Activated naive CD4-positive, alpha-beta T cell treated with anti-CD3 and anti-CD28 coated beads for 36 hours (primary cell): ENCODE measurements at regions of chr14 and their contacts with region 1.

Region 1: GRCh38 chr14:35883677-35884293 is 57.6 kb downstream of the BRMS1L start:
- DNase-seq: peak; percentile 55
- H3K4me3 Mint-ChIP-seq: no peak overlapping the region
- H3K27ac Mint-ChIP-seq: no peak overlapping the region
- H3K4me1 Mint-ChIP-seq: no peaks in the 10 kb centered on the region
- H3K27me3 Mint-ChIP-seq: peaks cover 2% of the 10 kb centered on the region

Region 2: GRCh38 chr14:35944847-35945246 is 61.1 kb after region 1 on chr14:
- CTCF ChIA-PET with region 1: interaction called, 8 read pairs
- intact Hi-C with region 1: loop called (anchors 1 kb)
- DNase-seq: peak; percentile 45
- H3K4me3 Mint-ChIP-seq: no peak overlapping the region
- H3K27ac Mint-ChIP-seq: no peak overlapping the region
- H3K4me1 Mint-ChIP-seq: peaks cover 2% of the 10 kb centered on the region
- H3K27me3 Mint-ChIP-seq: no peaks in the 10 kb centered on the region

Region 3: DNA sequence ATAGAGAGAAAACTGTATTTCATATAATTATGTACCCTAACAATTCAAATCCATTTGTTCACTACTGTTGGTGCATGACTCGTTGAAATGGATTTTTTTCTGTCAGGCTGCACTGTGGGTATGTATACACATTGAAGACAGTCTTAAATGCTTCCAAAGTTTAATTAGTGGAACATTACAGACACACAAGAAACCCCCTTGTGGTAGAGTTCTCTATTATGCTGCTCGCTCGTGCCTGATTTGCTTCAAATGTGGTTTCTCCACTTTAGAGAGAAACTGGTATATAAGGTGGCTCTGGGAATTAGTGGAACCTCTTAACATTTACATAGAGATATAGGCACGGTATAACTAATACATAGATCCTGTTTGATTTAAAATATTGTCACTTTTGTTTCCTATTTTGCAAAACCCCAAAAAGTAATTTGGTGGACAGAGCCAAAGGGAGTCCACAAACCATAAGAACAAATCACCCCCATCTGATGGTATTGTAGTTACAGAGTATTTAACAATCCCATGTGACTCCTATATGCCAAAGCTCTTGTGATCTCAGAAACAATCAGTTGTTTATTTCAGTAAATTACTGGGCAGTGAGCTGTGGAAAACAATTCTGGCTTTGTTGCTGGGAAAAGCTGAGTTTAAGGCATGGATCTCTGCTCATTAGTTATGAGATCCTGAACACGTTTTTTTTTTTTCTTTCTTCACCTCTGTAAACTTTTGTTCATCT is 101.9 kb after region 1 on chr14:
- CTCF ChIA-PET with region 1: no interaction called
- intact Hi-C with region 1: no loop called
- DNase-seq: no peak
- H3K4me3 Mint-ChIP-seq: no peak overlapping the region
- H3K27ac Mint-ChIP-seq: no peak overlapping the region
- H3K4me1 Mint-ChIP-seq: peaks cover 1% of the 10 kb centered on the region
- H3K27me3 Mint-ChIP-seq: peaks cover 3% of the 10 kb centered on the region

Region 4: GRCh38 chr14:36028218-36028617 is 144.4 kb after region 1 on chr14:
- CTCF ChIA-PET with region 1: interaction called, 4 read pairs
- intact Hi-C with region 1: loop called (anchors 2 kb)
- DNase-seq: peak; percentile 23
- H3K4me3 Mint-ChIP-seq: no peak overlapping the region
- H3K27ac Mint-ChIP-seq: no peak overlapping the region
- H3K4me1 Mint-ChIP-seq: no peaks in the 10 kb centered on the region
- H3K27me3 Mint-ChIP-seq: peaks cover 3% of the 10 kb centered on the region

Region 5: GRCh38 chr14:36070031-36070719 is 186.4 kb after region 1 on chr14:
- CTCF ChIA-PET with region 1: interaction called, 99 read pairs
- intact Hi-C with region 1: loop called (anchors 1 kb)
- DNase-seq: peak; percentile 70
- H3K4me3 Mint-ChIP-seq: no peak overlapping the region
- H3K27ac Mint-ChIP-seq: no peak overlapping the region
- H3K4me1 Mint-ChIP-seq: no peaks in the 10 kb centered on the region
- H3K27me3 Mint-ChIP-seq: peaks cover 21% of the 10 kb centered on the region

Region 6: GRCh38 chr14:36604757-36605505 is 721.1 kb after region 1 on chr14:
- CTCF ChIA-PET with region 1: no interaction called
- intact Hi-C with region 1: loop called (anchors 2 kb)
- DNase-seq: peak; percentile 69
- H3K4me3 Mint-ChIP-seq: no peak overlapping the region
- H3K27ac Mint-ChIP-seq: no peak overlapping the region
- H3K4me1 Mint-ChIP-seq: no peaks in the 10 kb centered on the region
- H3K27me3 Mint-ChIP-seq: peaks cover 13% of the 10 kb centered on the region